ENCODE measurements at regions of chr3 and their contacts with region 1.

Region 1: DNA sequence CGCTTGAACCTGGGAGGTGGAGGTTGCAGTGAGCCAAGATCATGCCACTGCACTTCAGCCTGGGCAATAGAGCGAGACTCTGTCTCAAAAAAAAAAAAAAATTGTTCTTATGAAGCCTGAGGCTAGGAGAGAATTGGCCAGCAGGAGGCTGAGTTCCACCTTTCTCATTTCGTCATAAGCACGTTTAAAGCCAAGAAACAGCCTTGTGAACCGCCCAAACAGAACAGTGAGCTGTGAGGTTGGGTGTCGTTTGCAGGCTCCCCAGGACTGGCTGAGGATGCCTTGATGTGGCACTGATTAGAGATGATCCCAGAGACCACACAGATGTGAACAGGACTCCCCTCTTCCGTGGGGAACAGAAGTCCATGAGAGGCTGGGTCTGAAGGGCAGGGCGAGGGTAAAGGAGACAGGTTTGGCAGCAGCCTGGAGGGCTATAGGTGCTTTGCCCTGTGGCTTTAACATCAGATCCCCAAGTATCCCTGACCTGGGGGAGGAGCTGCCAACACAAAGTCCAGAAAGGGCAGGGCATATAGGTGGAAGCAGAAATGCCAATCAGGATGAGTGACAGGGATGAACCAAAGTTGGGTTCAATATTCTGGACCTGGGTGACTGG is 52.9 kb downstream of the CLEC3B start:
- DNase-seq: no peak
- ATAC-seq: peak; percentile 69
- H3K4me3 ChIP-seq: no peak overlapping the region
- H3K27ac ChIP-seq: no peak overlapping the region
- H3K4me1 ChIP-seq: peaks cover 8% of the 10 kb centered on the region
- H3K27me3 ChIP-seq: no peaks in the 10 kb centered on the region
- CTCF ChIP-seq: no peak
- EP300 ChIP-seq: no peak
- POLR2A ChIP-seq: no peak
- RAD21 ChIP-seq: no peak

Region 2: DNA sequence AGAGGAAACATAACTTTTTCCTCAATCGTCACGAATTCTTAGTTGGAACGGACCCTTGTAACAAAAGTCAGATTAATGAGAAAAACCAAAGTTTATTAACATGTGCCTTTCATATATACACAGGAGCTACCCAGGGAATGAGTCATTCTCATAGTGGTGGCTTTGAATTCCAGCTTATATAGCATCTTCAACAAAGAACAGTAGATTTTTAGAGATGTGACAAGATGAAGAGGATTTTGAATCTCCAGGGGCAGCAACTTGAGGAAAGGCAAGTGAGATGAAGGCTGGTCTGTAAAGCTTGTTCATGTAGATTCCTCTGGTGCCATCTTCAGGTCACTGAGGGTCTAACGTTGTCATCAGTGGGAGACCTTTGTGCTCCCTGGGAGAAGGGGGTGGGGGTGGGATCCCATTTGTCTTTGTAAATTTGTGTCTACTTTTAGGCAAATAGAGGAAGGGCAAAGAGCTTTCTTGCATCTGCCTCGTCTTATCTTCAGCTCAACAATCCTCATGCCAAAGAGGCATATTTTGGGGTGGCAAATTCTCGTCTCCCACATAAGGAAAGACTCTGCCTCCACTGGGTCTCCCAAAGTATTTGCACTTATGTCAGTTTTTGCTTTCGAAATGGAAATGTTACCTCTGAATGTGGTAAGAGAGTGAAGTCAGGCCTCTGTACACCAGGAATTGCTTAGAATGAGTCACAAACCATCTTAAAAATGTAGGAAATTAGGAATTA is 23.4 kb before region 1 on chr3:
- CTCF ChIA-PET with region 1: no interaction called
- POLR2A ChIA-PET with region 1: no interaction called
- in situ Hi-C with region 1: no loop called
- intact Hi-C with region 1: no loop called
- DNase-seq: peak; percentile 65
- ATAC-seq: peak; percentile 86
- H3K4me3 ChIP-seq: no peak overlapping the region
- H3K27ac ChIP-seq: no peak overlapping the region
- H3K4me1 ChIP-seq: peaks cover 9% of the 10 kb centered on the region; the same call in 1 of the 2 replicates
- H3K27me3 ChIP-seq: peaks cover 1 to 13% of the 10 kb centered on the region in 2 experiments; a peak in 2 of 5 replicates
- CTCF ChIP-seq: peak; percentile 59
- EP300 ChIP-seq: no peak
- POLR2A ChIP-seq: no peak
- RAD21 ChIP-seq: no peak

Region 3: DNA sequence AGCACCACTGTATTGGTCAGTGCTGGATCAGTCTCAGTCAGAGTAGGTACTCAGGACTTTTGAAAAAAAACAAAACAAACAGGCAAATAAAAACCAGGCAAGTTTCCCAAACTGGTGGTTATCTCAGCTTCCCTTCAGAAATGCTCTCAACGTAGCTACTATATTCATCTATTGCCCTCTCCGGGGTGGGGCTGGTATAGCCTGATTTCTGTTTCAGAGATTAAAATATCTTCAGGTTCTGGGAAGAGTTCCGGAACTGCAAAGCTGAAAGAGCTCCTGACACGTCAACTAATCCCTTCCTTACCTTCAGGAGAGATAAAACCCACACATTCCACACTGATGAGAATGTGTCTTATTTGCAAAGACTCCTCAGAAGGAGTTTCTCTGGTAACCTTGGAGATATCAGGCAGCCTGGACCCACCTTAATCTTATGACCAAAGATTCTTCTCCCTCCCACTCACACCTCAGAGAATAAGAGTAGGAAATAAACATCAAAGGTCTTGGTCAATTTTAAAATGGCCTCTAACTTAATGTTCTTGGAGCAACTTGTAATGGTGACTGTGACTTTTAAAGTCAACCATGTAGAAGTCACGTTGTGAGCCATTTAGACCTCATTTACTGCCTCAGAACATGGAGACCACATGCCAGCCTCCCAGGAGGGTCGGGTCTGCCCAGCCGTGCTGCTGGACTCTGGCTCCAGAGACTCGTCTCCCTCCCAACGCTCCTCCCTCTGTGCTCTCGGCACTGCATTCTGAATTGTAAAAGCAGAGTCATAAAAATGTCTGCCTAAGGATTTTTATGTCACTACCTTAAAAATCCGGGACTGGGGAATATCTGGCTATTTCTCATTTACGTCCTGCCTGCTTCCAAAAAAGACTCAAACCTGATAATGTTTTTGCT is 13.4 kb after region 1 on chr3:
- CTCF ChIA-PET with region 1: no interaction called
- POLR2A ChIA-PET with region 1: no interaction called
- in situ Hi-C with region 1: no loop called
- intact Hi-C with region 1: loop called (anchors 1 kb)
- DNase-seq: no peak
- ATAC-seq: peak; percentile 35; the same call in 1 of the 3 replicates
- H3K4me3 ChIP-seq: no peak overlapping the region
- H3K27ac ChIP-seq: no peak overlapping the region
- H3K4me1 ChIP-seq: peaks cover 17% of the 10 kb centered on the region; the same call in 1 of the 2 replicates
- H3K27me3 ChIP-seq: no peaks in the 10 kb centered on the region; a peak in 2 of 5 replicates
- CTCF ChIP-seq: no peak
- EP300 ChIP-seq: no peak
- POLR2A ChIP-seq: no peak
- RAD21 ChIP-seq: no peak

Measured in HepG2 (cell line).